ENCODE measurements at regions of chr13 and their contacts with region 1.

Region 1: DNA sequence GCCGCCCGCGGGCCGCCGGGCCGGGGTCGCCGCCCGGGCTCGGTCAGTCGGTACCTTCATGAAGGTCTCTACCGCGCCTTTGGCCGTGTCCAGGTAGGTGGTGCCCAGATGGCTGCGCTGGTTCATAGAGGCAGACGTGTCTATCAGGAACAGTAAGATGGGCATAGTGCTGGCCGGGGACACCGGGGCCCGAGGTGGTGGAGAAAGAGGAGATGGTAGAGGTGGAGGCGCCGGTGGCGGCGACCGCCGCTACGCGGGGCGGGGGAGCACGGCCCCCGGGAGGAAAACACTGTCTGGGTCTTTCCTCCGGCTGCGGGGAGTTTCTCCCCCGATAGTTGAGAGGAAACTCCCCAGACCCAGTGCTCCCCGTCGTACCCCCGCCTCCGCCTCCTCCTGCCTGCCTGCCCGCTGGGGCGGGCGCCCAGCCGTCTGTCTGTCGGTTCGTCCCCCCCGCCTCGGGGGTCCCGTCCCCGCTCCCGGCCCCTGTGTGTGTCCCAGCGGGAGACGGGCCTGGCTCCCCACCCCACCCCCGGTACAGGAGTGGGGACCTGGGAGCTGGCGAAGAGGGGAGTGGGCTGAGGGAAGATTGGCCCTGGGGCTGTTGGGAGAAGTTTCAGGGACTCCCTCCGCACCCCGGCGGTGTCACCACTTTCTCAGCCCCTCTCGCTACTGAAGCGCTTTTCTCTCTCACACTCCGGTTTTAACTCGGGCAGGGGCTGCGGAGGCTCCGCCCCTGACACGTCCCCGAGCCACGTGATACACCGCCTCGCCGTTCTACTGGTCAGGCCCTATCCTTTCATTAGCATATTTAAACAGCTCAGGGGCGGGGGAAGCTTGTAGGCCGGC is at the start of gene INTS6:
- DNase-seq: peak; percentile 99
- ATAC-seq: peak; percentile 95
- H3K4me3 ChIP-seq: peak within 1 kb of the TSS; percentile 85
- H3K27ac ChIP-seq: peak within 1 kb of the TSS; percentile 100
- H3K4me1 ChIP-seq: no peaks in the 10 kb centered on the region
- H3K27me3 ChIP-seq: no peaks in the 10 kb centered on the region
- total RNA-seq, gene INTS6: 21.0 to 29.3 (median 25.4) TPM

Region 2: GRCh38 chr13:51583875-51584730 is 131.5 kb after region 1 on chr13 and contains the start of gene WDFY2:
- intact Hi-C with region 1: loop called in 3 of 4 experiments (anchors 5 kb)
- DNase-seq: peak; percentile 99 to 100 (median 100)
- ATAC-seq: peak; percentile 97
- H3K4me3 ChIP-seq: peak within 1 kb of the TSS; percentile 56
- H3K27ac ChIP-seq: peak within 1 kb of the TSS; percentile 91
- H3K4me1 ChIP-seq: no peaks in the 10 kb centered on the region
- H3K27me3 ChIP-seq: no peaks in the 10 kb centered on the region
- total RNA-seq, gene WDFY2: 4.9 to 7.9 (median 6.4) TPM

Region 3: GRCh38 chr13:51721496-51721895 is 268.9 kb after region 1 on chr13:
- intact Hi-C with region 1: loop called in 1 of 4 experiments (anchors 5 kb)
- DNase-seq: peak in 2 of 3 donors; percentile 40 to 57
- ATAC-seq: peak; percentile 75 to 88
- H3K4me3 ChIP-seq: no peak overlapping the region
- H3K27ac ChIP-seq: peak overlapping the region; percentile 62
- H3K4me1 ChIP-seq: peaks cover 4% of the 10 kb centered on the region
- H3K27me3 ChIP-seq: no peaks in the 10 kb centered on the region

Region 4: GRCh38 chr13:51781246-51782022 is 328.9 kb after region 1 on chr13:
- intact Hi-C with region 1: loop called in 1 of 4 experiments (anchors 10 kb)
- DNase-seq: peak in 1 of 3 donors; percentile 58
- ATAC-seq: peak in 1 of 2 donors; percentile 39
- H3K4me3 ChIP-seq: no peak overlapping the region
- H3K27ac ChIP-seq: no peak overlapping the region
- H3K4me1 ChIP-seq: peaks cover 11% of the 10 kb centered on the region
- H3K27me3 ChIP-seq: no peaks in the 10 kb centered on the region

Region 5: DNA sequence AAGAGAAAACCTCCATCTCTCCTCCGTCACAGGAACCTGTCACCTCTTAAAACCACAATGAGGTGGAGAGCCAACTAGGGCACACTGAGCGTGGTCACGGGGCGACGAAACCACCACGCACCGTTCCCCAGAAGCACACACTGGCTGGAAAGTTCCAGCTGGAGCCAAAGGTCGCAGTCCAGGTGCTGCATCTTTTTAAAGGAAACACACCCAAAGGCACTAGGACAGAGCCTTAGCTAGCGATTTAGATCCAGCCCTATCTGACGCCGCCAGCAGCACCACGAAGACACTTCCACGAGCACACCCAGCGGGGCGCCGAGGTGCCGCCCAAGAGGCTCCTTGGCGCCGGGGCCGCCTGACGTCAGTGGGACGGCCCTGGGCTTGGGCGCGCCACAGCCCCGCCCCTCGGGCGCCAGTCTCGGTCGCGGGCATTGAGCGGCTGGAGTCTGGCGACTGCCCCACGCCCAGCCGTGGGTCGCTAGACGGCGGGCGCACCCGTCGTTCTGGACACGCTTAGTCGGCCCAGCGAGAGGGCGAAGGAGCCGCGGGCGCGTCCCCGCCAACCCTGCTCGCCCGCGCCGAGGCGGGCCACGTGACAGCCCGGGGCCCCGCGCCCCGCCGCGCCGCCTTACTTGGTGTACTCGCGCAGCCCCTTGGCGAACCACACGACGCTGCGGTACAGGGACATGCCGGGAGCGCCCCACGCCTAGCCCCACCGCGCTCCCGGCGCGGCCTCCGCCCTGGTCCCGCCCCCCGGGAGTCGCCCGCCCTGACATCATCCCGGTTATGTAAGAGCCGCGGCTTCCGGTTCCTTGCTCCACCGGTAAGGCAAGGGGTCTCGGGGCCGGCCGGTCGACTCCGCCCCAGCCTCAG is 351.1 kb after region 1 on chr13 and contains the start of gene DHRS12:
- intact Hi-C with region 1: loop called in 1 of 4 experiments (anchors 10 kb)
- DNase-seq: peak; percentile 93 to 98 (median 97)
- ATAC-seq: peak; percentile 90 to 92
- H3K4me3 ChIP-seq: peak within 1 kb of the TSS; percentile 60
- H3K27ac ChIP-seq: peak within 1 kb of the TSS; percentile 92
- H3K4me1 ChIP-seq: peaks cover 17% of the 10 kb centered on the region
- H3K27me3 ChIP-seq: no peaks in the 10 kb centered on the region
- total RNA-seq, gene DHRS12: 11.1 to 13.6 (median 12.2) TPM

Measured in right cardiac atrium (tissue), 5 donors.